ENCODE measurements at regions of chr12 and their contacts with region 1.

Region 1: GRCh38 chr12:5171701-5172100 is 128.0 kb downstream of the KCNA5 start:
- DNase-seq: no peak
- ATAC-seq: peak; percentile 17 to 35
- H3K4me3 ChIP-seq: no peak overlapping the region
- H3K27ac ChIP-seq: peak overlapping the region in 3 of 4 donors; percentile 80 to 89 (median 83)
- H3K4me1 ChIP-seq: peaks cover 25 to 37% of the 10 kb centered on the region in 2 donors
- H3K27me3 ChIP-seq: no peaks in the 10 kb centered on the region
- CTCF ChIP-seq: peak; percentile 30 to 65 (median 50)
- POLR2A ChIP-seq: no peak

Region 2: GRCh38 chr12:5013266-5013730 is 158.4 kb before region 1 on chr12:
- in situ Hi-C with region 1: no loop called
- intact Hi-C with region 1: loop called (anchors 10 kb)
- DNase-seq: peak; percentile 38 to 54
- ATAC-seq: peak; percentile 68 to 70
- H3K4me3 ChIP-seq: no peak overlapping the region
- H3K27ac ChIP-seq: peak overlapping the region in 3 of 4 donors; percentile 41 to 72 (median 60)
- H3K4me1 ChIP-seq: peaks cover 27 to 34% of the 10 kb centered on the region in 2 donors
- H3K27me3 ChIP-seq: no peaks in the 10 kb centered on the region
- CTCF ChIP-seq: peak in 2 of 5 experiments; percentile 12 to 33
- POLR2A ChIP-seq: no peak

Region 3: GRCh38 chr12:5073853-5074252 is 97.8 kb before region 1 on chr12:
- in situ Hi-C with region 1: no loop called
- intact Hi-C with region 1: no loop called
- DNase-seq: no peak
- ATAC-seq: no peak
- H3K4me3 ChIP-seq: no peak overlapping the region
- H3K27ac ChIP-seq: no peak overlapping the region
- H3K4me1 ChIP-seq: no peaks in the 10 kb centered on the region
- H3K27me3 ChIP-seq: no peaks in the 10 kb centered on the region
- CTCF ChIP-seq: no peak
- POLR2A ChIP-seq: no peak

Region 4: GRCh38 chr12:5096241-5096935 is 75.3 kb before region 1 on chr12:
- in situ Hi-C with region 1: no loop called
- intact Hi-C with region 1: no loop called
- DNase-seq: no peak
- ATAC-seq: no peak
- H3K4me3 ChIP-seq: no peak overlapping the region
- H3K27ac ChIP-seq: no peak overlapping the region
- H3K4me1 ChIP-seq: no peaks in the 10 kb centered on the region
- H3K27me3 ChIP-seq: peaks cover 5 to 14% (median 6%) of the 10 kb centered on the region in 3 donors
- CTCF ChIP-seq: no peak
- POLR2A ChIP-seq: no peak

Region 5: DNA sequence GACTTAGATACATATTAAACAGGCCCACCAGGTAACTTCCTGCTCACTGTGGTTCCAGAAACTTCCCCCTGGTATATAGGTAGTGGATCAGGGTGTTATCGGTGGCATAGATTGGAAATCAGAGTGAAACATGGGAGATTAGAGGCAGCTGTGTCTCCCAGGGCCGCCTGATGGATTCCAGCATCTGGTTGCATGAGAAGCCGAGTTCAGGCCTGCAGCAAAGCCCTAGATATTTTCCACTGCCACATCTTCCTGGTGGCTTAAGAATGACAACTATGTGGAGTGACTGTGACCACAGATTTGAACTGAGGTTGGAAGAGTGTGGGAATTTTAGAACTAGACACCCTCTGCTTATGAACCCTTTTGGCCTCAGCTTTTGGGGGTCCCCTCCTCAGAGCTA is 75.4 kb after region 1 on chr12:
- in situ Hi-C with region 1: no loop called
- intact Hi-C with region 1: loop called (anchors 5 kb)
- DNase-seq: no peak
- ATAC-seq: no peak
- H3K4me3 ChIP-seq: no peak overlapping the region
- H3K27ac ChIP-seq: no peak overlapping the region
- H3K4me1 ChIP-seq: peaks cover 10 to 19% of the 10 kb centered on the region in 2 donors
- H3K27me3 ChIP-seq: no peaks in the 10 kb centered on the region
- CTCF ChIP-seq: no peak
- POLR2A ChIP-seq: no peak

Region 6: GRCh38 chr12:5333096-5333495 is 161.4 kb after region 1 on chr12:
- in situ Hi-C with region 1: no loop called
- intact Hi-C with region 1: loop called (anchors 5 kb)
- DNase-seq: peak; percentile 27 to 59
- ATAC-seq: peak; percentile 98
- H3K4me3 ChIP-seq: no peak overlapping the region
- H3K27ac ChIP-seq: peak overlapping the region; percentile 45 to 77 (median 74)
- H3K4me1 ChIP-seq: peaks cover 7 to 23% of the 10 kb centered on the region in 2 donors
- H3K27me3 ChIP-seq: no peaks in the 10 kb centered on the region
- CTCF ChIP-seq: no peak
- POLR2A ChIP-seq: no peak

Region 7: DNA sequence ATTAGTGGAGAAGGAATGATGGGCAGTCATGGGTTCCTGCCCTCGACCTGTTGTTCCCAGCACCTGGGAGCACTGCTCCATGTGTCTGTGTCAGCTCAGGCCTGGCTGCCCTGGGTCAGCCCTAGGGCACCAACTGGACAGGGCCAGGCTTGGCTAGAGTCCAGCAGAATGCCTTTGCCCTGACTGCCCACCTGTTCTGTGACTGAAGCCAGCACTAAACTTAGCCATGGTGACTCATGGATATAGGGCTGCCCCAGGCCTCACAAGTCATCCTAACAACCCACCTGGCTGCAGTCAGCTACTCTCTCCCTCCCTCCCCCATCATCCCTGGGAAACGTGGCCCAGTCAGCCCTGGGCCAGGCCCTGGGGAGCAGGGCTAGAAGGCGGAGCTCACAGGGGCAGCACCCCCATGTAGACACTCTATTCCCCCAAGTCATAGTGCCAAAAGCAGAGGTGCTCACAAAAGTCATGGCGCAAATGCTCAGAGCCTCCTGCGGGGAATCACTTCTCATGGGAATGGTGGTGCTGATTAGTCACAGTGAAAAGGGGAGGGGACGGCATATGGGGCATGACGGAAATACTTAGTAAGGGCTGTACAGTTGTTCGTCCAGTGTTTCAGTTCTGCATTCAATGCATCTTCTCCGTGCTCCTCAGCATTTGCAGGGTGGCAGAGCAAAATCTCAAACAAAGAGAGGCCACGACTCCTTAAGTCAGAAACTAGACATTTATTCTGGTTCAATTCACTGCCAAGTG is 208.2 kb after region 1 on chr12:
- in situ Hi-C with region 1: no loop called
- intact Hi-C with region 1: loop called (anchors 2 kb)
- DNase-seq: peak; percentile 93 to 96
- ATAC-seq: peak; percentile 97 to 98
- H3K4me3 ChIP-seq: no peak overlapping the region
- H3K27ac ChIP-seq: peak overlapping the region; percentile 68 to 81 (median 76)
- H3K4me1 ChIP-seq: peaks cover 27 to 33% of the 10 kb centered on the region in 2 donors
- H3K27me3 ChIP-seq: no peaks in the 10 kb centered on the region
- CTCF ChIP-seq: no peak
- POLR2A ChIP-seq: no peak

Region 8: GRCh38 chr12:5428332-5429221 is 256.9 kb after region 1 on chr12:
- in situ Hi-C with region 1: no loop called
- intact Hi-C with region 1: loop called (anchors 2 kb)
- DNase-seq: no peak
- ATAC-seq: no peak
- H3K4me3 ChIP-seq: no peak overlapping the region
- H3K27ac ChIP-seq: no peak overlapping the region
- H3K4me1 ChIP-seq: peaks cover 22 to 40% of the 10 kb centered on the region in 2 donors
- H3K27me3 ChIP-seq: peaks cover 2 to 34% (median 21%) of the 10 kb centered on the region in 3 donors
- CTCF ChIP-seq: peak in 4 of 5 experiments; percentile 19 to 47 (median 33)
- POLR2A ChIP-seq: no peak

Measured in gastrocnemius medialis (tissue), 4 donors.